ENCODE measurements at regions of chr3 and their contacts with region 1.

Region 1: GRCh38 chr3:122564155-122564912 is at the starts of genes DTX3L and PARP9:
- DNase-seq: peak; percentile 67
- ATAC-seq: peak; percentile 83
- H3K4me3 Mint-ChIP-seq: peak within 1 kb of the TSS; percentile 93
- H3K27ac Mint-ChIP-seq: peak within 1 kb of the TSS; percentile 96
- H3K4me1 Mint-ChIP-seq: peaks cover 82% of the 10 kb centered on the region
- H3K27me3 Mint-ChIP-seq: no peaks in the 10 kb centered on the region
- CTCF ChIP-seq: no peak
- total RNA-seq, gene DTX3L: 73.8 and 76.5 TPM in 2 replicates
- total RNA-seq, gene PARP9: 45.9 and 50.8 TPM in 2 replicates

Region 2: GRCh38 chr3:122392868-122393844 is 171.2 kb before region 1 on chr3:
- CTCF ChIA-PET with region 1: no interaction called
- POLR2A ChIA-PET with region 1: no interaction called
- intact Hi-C with region 1: loop called (anchors 5 kb)
- DNase-seq: no peak
- ATAC-seq: no peak
- H3K4me3 Mint-ChIP-seq: no peak overlapping the region
- H3K27ac Mint-ChIP-seq: no peak overlapping the region
- H3K4me1 Mint-ChIP-seq: peaks cover 15% of the 10 kb centered on the region
- H3K27me3 Mint-ChIP-seq: no peaks in the 10 kb centered on the region
- CTCF ChIP-seq: peak; percentile 87

Region 3: GRCh38 chr3:122548076-122548475 is 16.3 kb before region 1 on chr3:
- CTCF ChIA-PET with region 1: no interaction called
- POLR2A ChIA-PET with region 1: no interaction called
- intact Hi-C with region 1: no loop called
- DNase-seq: no peak
- ATAC-seq: no peak
- H3K4me3 Mint-ChIP-seq: no peak overlapping the region
- H3K27ac Mint-ChIP-seq: no peak overlapping the region
- H3K4me1 Mint-ChIP-seq: no peaks in the 10 kb centered on the region
- H3K27me3 Mint-ChIP-seq: no peaks in the 10 kb centered on the region
- CTCF ChIP-seq: no peak

Region 4: DNA sequence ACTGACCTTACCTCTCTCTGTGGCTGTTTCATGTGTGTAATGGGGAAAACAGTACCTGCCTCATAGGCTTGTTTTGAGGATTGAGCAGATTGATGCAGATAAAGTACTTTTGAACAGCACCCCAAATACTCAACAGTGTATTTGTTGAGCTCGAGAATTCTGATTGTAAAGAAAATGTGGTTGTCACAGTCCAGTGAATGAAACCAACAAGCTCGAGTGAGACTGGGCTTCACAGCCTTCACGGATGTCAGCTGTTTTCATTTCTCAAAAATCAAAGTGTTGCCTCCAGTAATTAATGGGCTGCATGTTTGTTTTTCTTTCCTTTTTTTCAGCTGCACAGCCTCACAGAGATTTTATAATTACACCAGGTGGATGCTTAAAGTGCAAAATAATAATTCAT is 56.8 kb after region 1 on chr3:
- CTCF ChIA-PET with region 1: interaction called, 5 read pairs
- POLR2A ChIA-PET with region 1: interaction called, 72 read pairs
- intact Hi-C with region 1: loop called (anchors 1 kb)
- DNase-seq: no peak
- ATAC-seq: peak; percentile 38
- H3K4me3 Mint-ChIP-seq: peak overlapping the region; percentile 56
- H3K27ac Mint-ChIP-seq: peak overlapping the region; percentile 85
- H3K4me1 Mint-ChIP-seq: peaks cover 73% of the 10 kb centered on the region
- H3K27me3 Mint-ChIP-seq: no peaks in the 10 kb centered on the region
- CTCF ChIP-seq: no peak

Region 5: DNA sequence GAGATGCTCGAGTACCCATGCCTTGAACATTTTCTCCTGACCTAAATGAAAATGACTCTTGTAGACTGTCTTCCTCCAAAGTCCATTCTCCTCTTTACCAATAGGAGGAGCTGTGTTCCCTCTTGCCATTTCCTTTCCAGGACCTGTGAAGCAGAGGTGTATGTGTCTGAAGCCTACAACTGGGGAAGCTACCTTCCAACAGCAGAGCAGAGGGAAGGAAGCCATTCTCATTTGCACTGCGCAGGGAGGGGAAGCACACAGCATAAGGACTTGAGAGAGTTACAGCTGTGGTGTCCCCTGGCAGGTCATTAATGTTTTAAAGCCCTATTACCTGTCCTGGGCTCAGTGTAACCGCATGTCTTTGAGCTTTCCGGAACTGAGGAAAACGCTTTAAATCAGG is 190.6 kb after region 1 on chr3:
- CTCF ChIA-PET with region 1: no interaction called
- POLR2A ChIA-PET with region 1: no interaction called
- intact Hi-C with region 1: loop called (anchors 1 kb)
- DNase-seq: no peak
- ATAC-seq: peak; percentile 79
- H3K4me3 Mint-ChIP-seq: no peak overlapping the region
- H3K27ac Mint-ChIP-seq: no peak overlapping the region
- H3K4me1 Mint-ChIP-seq: no peaks in the 10 kb centered on the region
- H3K27me3 Mint-ChIP-seq: no peaks in the 10 kb centered on the region
- CTCF ChIP-seq: peak; percentile 54

Region 6: DNA sequence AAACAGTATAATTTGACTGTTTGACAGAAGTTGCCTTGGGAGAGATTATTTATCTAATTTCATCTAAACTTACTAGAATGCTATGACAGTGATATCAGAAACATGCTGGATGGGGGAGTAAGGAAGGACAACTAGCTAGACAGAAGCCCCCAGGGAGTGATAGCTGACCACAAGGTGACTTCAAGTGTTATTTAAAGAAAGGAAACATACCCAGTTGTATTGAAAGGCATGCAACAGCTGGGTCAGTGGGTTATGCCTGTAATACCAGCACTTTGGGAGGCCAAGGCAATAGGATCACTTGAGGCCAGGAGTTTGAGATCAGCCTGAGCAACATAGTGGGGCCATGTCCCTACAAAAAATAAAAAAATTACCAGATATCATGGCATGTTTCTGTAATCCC is 300.2 kb after region 1 on chr3:
- CTCF ChIA-PET with region 1: no interaction called
- POLR2A ChIA-PET with region 1: no interaction called
- intact Hi-C with region 1: loop called (anchors 10 kb)
- DNase-seq: no peak
- ATAC-seq: no peak
- H3K4me3 Mint-ChIP-seq: no peak overlapping the region
- H3K27ac Mint-ChIP-seq: no peak overlapping the region
- H3K4me1 Mint-ChIP-seq: peaks cover 3% of the 10 kb centered on the region
- H3K27me3 Mint-ChIP-seq: no peaks in the 10 kb centered on the region
- CTCF ChIP-seq: no peak

Region 7: DNA sequence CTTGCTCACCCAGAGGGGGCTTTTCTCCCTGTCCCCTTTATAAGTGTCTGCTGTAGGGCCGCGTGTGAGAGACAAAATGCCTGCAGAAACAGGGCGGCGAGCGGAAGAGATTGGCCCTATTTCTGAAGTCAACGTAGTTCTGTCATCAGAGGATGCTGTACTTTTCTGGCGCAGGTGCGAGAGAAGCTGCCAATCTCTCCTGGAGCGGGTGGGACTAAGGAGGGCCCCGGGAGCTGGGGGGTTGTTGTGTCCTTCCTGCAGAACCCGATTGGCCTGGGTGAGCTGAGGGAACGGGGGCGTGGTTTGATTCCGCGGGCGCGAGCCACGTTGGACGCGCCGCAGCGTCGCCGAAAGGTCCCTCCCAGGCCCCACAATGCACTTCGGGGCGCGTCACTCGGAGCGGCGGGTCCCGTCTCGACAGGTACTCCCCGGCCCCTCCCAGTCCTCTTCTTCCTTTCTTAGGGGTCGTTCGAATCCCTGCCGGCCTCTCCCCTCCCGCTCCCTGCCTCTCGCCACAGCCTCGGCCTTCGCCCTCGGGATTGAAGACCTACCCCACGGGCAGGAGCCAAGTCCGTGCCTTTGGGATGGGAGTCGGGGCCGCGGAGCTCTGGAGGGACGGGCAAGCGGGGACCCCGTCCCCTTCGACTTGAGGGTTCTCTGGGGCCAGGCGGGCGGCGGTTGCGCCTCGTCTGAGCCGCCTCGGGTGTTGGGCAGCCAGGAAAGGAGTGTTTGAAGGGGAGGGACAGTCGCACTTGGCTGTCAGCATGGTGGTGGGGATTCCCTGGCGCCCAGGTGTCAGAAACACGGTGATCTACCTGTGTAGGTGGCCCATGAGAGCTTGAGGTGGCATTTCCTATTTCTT is 637.5 kb after region 1 on chr3 and contains the start of gene SEC22A:
- CTCF ChIA-PET with region 1: no interaction called
- POLR2A ChIA-PET with region 1: no interaction called
- intact Hi-C with region 1: loop called (anchors 5 kb)
- DNase-seq: peak; percentile 88
- ATAC-seq: peak; percentile 96
- H3K4me3 Mint-ChIP-seq: peak within 1 kb of the TSS; percentile 96
- H3K27ac Mint-ChIP-seq: peak within 1 kb of the TSS; percentile 97
- H3K4me1 Mint-ChIP-seq: peaks cover 16% of the 10 kb centered on the region
- H3K27me3 Mint-ChIP-seq: peaks cover under 1% of the 10 kb centered on the region
- CTCF ChIP-seq: no peak
- total RNA-seq, gene SEC22A: 13.5 and 15.9 TPM in 2 replicates